H1 (cell line): ENCODE measurements at regions of chr6 and their contacts with region 1.

Region 1: GRCh38 chr6:25788305-25788922 is 33.9 kb downstream of the SLC17A4 start:
- DNase-seq: peak; percentile 23 to 76
- H3K4me3 ChIP-seq: no peak overlapping the region
- H3K27ac ChIP-seq: no peak overlapping the region
- H3K4me1 ChIP-seq: no peaks in the 10 kb centered on the region
- H3K27me3 ChIP-seq: peaks cover 0 to 1% (median 0%) of the 10 kb centered on the region in 4 experiments; a peak in 1 of 7 replicates
- CTCF ChIP-seq: peak; percentile 71 to 85 (median 84)
- EP300 ChIP-seq: no peak
- POLR2A ChIP-seq: no peak
- RAD21 ChIP-seq: peak; percentile 70 to 71

Region 2: DNA sequence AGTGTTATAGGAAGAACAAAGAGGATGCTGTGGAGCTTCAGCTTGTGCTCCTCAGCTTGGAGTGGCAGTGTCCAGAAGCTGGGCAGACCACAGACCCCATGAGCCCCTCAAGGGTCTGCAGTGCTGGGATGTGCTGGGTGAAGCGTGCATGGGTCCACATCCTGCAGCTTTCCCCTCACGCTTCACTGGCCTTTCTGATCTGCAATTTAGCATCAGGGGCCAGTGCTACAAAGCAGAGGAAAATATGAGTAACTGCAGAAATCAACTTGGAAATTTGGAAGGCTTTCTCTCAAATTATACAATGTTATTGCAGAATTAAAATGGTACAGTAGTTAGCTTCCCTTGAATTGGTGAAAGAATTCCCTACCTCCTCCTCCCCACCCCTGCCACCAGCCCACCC is 23.8 kb before region 1 on chr6:
- CTCF ChIA-PET with region 1: interaction called, 15 read pairs
- POLR2A ChIA-PET with region 1: no interaction called
- DNase-seq: no peak
- H3K4me3 ChIP-seq: no peak overlapping the region
- H3K27ac ChIP-seq: no peak overlapping the region
- H3K4me1 ChIP-seq: no peaks in the 10 kb centered on the region
- H3K27me3 ChIP-seq: no peaks in the 10 kb centered on the region
- CTCF ChIP-seq: no peak
- EP300 ChIP-seq: no peak
- POLR2A ChIP-seq: no peak
- RAD21 ChIP-seq: no peak

Region 3: DNA sequence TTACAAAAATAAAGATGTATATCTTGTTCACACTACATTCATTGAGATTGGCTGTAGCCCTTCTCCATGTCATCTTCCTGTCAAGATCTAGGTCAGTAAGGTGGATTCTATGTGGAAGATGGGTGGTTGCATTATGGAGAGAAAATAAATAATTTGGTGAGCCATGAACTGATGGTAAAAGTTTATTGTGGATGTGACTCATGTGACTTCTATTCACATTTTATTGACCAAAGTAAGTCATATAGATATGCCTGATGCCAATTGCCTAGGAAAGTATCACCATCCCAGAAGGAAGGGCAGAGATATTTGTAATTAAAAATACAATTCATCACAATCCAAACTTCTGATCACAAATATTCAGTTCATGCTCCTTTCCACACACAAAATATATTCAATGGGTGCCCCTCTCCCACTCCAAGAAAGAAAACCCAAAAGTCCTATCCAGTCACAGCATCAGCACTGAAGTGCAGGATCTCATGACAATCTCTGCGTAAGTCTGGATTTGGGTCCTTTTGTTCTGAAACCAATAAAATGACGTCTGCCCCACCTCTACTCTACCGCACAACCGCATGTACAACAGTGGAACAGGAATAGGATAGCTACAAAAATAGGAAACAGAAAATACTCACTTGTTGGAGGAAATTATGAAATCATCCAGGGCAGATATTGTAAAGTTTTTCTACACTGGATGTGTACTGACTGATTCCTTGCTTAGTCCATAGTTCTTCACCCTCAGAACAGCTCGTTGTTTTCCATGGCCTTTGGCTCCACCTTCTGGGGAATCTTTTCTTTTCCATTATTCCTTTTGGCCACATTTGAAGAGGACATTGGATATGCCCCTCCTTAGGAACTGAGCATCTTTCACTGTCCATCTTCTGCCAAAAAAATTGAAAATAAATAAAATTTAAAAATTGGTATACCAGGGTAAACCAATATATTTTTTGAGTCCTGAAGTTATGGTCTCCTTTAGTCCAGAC is 101.8 kb after region 1 on chr6:
- CTCF ChIA-PET with region 1: interaction called, 19 read pairs
- POLR2A ChIA-PET with region 1: no interaction called
- DNase-seq: no peak
- H3K4me3 ChIP-seq: no peak overlapping the region
- H3K27ac ChIP-seq: no peak overlapping the region
- H3K4me1 ChIP-seq: no peaks in the 10 kb centered on the region
- H3K27me3 ChIP-seq: no peaks in the 10 kb centered on the region
- CTCF ChIP-seq: peak in 2 of 3 experiments; percentile 60 to 64; a peak in 3 of 4 replicates
- EP300 ChIP-seq: no peak
- POLR2A ChIP-seq: no peak
- RAD21 ChIP-seq: peak; percentile 90 to 92